PC-9 (cell line): ENCODE measurements at regions of chr20 and their contacts with region 1.

Region 1: DNA sequence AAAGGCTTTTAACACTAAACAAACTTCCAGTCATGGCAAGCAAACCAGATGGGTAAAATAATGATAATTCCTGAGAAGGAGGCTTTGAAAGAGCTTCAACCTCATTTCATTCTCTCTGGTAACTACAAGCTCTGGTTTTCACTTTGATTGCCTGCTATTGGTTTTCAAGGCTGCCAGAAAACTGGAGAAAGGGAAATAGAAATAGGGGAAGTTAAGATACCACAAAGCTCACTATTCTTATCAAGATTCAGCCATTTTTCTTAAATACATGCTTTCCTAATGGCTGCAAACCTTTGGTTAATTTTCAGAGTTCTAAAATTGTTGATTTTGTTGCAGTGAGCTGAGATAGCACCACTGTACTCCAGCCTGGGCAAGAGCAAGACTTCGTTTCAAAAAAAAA is 42.5 kb upstream of the NELFCD start:
- DNase-seq: no peak
- H3K4me3 ChIP-seq: no peak overlapping the region
- H3K27ac ChIP-seq: no peak overlapping the region
- H3K4me1 ChIP-seq: peaks cover 11% of the 10 kb centered on the region
- H3K27me3 ChIP-seq: no peaks in the 10 kb centered on the region
- CTCF ChIP-seq: no peak

Region 2: DNA sequence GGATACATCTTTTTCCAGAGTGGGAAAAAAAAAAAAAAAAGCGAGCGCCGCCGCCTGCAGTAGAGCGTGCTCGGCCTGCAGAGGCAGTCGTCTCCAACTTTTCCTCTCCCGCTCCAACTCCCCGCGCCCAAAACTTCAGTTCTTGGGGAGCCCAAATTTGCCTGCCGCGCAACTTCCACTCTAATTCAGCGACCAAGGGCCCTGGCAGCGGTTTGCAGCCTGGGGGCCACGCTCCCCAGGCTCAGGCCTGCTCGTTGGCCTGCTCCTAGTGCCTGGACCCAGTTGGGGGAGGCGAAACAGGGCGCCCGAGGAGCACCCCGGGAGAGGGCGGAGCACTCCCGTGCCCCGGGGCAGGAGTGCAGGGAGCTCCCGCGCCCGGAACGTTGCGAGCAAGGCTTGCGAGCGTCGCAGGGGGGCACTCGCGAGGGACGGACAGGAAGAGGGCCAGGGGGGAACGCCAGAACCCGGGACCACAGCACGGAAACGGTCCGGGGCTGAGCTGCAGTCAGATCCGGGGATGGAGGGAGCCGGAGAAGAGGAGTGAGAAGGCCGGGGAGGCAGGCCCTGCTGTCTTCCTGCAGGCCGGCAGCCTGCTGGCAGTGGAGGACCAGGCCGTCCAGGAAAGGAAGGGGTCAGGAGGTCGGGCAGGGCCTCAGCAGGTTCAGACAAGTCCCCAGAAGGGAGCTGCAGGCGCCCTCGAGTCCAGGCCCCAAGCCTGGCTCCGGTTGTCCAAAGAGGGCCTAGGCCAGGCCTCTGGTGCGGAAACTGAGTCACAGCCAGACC is 287.6 kb before region 1 on chr20 and contains the start of gene STX16:
- CTCF ChIA-PET with region 1: no interaction called
- POLR2A ChIA-PET with region 1: no interaction called
- intact Hi-C with region 1: no loop called
- DNase-seq: peak; percentile 88 to 93
- H3K4me3 ChIP-seq: peak within 1 kb of the TSS; percentile 95
- H3K27ac ChIP-seq: peak within 1 kb of the TSS; percentile 77
- H3K4me1 ChIP-seq: peaks cover 25% of the 10 kb centered on the region
- H3K27me3 ChIP-seq: no peaks in the 10 kb centered on the region
- CTCF ChIP-seq: peak; percentile 87
- total RNA-seq, gene STX16: 76.3 and 85.5 TPM in 2 replicates

Region 3: DNA sequence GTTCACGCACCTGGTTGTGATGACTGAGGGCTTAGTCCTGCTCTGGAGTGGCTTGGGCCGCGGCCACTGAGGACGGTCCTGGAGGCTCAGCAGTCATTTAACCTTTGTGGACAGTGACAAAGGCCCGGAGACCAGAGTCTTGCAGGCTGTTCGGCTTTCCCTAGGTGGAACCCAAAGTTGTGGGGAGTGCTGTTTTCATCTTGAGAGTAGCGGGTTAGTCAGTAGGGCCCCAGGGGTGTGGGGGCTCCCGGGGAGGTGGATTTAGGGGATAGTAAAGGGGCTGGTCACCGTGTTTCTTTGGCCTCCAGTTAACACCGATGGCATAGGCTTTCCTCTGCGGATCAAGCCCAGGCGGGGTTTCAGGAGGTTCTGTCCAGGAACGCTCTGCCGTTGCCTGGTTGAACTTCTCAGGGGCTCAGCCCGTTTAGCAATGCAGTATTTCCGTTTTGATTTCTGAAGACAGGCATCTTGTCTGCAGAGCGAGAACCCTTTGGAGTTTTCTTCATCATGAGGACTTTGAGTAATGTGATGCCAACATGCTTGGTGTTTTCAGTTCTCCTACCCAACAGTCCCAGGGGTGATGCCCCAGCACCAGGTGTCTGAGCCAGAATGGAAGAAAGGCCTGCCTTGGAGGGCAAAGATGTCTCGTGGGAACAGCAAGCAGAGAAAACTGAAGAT is 256.9 kb after region 1 on chr20:
- CTCF ChIA-PET with region 1: interaction called, 18 read pairs
- POLR2A ChIA-PET with region 1: no interaction called
- intact Hi-C with region 1: no loop called
- DNase-seq: no peak
- H3K4me3 ChIP-seq: no peak overlapping the region
- H3K27ac ChIP-seq: no peak overlapping the region
- H3K4me1 ChIP-seq: no peaks in the 10 kb centered on the region
- H3K27me3 ChIP-seq: peaks cover 93% of the 10 kb centered on the region
- CTCF ChIP-seq: no peak

Region 4: DNA sequence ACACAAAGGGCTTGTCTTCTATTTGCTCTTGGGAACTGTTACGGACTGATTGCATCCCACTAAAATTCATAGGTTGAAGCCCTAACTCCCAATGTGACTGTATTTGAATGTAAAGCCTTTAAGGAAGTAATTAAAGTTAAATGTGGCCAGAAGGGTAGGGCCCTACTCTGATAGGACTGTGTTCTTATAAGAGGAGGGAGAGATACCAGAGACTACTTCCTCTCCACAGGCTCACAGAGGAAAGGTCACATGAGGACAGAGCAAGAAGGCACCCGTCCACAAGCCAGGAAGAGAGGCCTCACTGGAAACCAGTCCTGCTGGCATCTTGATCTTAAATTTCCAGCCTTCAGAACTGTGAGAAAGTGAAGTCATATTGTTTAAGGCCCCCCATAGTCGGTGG is 1231.6 kb after region 1 on chr20:
- CTCF ChIA-PET with region 1: no interaction called
- POLR2A ChIA-PET with region 1: no interaction called
- intact Hi-C with region 1: no loop called
- DNase-seq: no peak
- H3K4me3 ChIP-seq: no peak overlapping the region
- H3K27ac ChIP-seq: no peak overlapping the region
- H3K4me1 ChIP-seq: no peaks in the 10 kb centered on the region
- H3K27me3 ChIP-seq: peaks cover 81% of the 10 kb centered on the region
- CTCF ChIP-seq: no peak